Activated T-helper 1 cell treated with anti-CD3 and anti-CD28 coated beads, Interleukin-12 subunit alpha, Interleukin-12 subunit beta, Interleukin-2, Interleukin-4 antibody, amounts not matched to agents 30 ng/mL and 10 ng/mL and 1 ng/mL, durations not matched to agents 14 hours and 24 hours and 36 hours (primary cell): ENCODE measurements at regions of chr7 and their contacts with region 1.

Region 1: DNA sequence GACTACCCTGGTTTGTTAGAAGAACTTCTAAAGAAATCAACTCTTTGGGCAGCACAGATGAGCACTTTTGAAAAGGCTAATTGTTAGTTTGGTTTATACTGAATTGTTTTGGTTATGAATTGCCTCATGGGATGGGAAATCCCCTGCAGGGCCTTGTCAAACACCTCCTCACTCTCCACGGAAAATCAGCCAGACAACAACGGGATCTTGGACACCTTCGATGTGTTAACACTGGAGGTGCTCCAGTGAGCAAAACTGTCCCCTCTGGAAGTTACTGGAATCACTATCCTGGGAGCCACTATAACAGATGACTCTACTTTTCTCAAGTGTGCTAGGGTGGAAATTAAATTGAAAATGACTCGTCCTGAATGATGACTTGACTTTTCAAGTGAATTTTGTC is 38.7 kb downstream of the CDK6 start:
- DNase-seq: peak; percentile 27
- H3K4me3 Mint-ChIP-seq: no peak overlapping the region
- H3K27ac Mint-ChIP-seq: no peak overlapping the region
- H3K4me1 Mint-ChIP-seq: peaks cover 43% of the 10 kb centered on the region
- H3K27me3 Mint-ChIP-seq: no peaks in the 10 kb centered on the region

Region 2: GRCh38 chr7:92731335-92732063 is 66.2 kb before region 1 on chr7:
- intact Hi-C with region 1: loop called (anchors 1 kb)
- DNase-seq: no peak
- H3K4me3 Mint-ChIP-seq: peak overlapping the region; percentile 23
- H3K27ac Mint-ChIP-seq: peak overlapping the region; percentile 92
- H3K4me1 Mint-ChIP-seq: peaks cover 80% of the 10 kb centered on the region
- H3K27me3 Mint-ChIP-seq: no peaks in the 10 kb centered on the region

Region 3: GRCh38 chr7:92751902-92752901 is 45.5 kb before region 1 on chr7:
- intact Hi-C with region 1: loop called (anchors 1 kb)
- DNase-seq: no peak
- H3K4me3 Mint-ChIP-seq: no peak overlapping the region
- H3K27ac Mint-ChIP-seq: peak overlapping the region; percentile 68
- H3K4me1 Mint-ChIP-seq: peaks cover 87% of the 10 kb centered on the region
- H3K27me3 Mint-ChIP-seq: no peaks in the 10 kb centered on the region

Region 4: DNA sequence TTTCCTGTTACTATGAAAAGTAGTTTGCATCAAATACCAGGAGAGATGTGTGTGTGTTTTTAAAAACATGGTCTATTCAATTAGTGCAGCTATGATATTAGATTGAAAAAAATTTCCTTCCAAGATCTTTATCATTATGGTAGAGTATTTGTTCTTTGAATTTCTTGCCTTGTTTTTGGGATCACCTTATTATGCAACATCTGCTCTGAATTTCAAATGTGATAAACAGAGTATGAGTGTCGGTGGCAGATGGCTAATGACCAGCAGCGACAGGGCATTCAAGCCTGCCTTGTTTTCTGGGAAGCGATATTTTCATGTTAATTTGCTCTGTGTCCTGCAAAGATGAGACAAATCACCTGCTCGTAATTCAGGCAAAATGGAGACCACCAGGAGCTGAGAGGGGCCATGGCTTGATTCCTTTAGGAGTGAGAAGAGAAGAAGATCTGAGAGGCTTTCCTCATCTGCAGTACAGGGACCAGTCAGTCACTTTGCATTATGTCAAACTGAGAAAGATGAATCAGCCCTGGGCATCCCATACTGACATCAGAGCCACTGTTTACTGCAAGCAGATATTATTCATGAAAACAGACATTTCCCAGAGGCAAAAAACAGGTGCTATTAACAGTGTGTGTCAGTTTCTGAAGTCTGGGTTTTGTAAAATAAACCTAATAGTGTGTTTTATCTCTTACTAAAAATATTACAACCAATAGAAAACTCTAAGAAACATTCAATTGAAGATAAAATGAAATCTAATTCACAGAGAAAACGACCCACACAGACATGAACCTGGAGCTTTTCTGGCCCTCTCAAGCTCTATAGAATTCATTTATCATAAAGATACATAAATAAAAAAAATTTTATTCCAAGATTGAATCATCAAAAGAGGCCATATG is 28.9 kb before region 1 on chr7:
- intact Hi-C with region 1: loop called (anchors 1 kb)
- DNase-seq: peak; percentile 20
- H3K4me3 Mint-ChIP-seq: peak overlapping the region; percentile 47
- H3K27ac Mint-ChIP-seq: peak overlapping the region; percentile 85
- H3K4me1 Mint-ChIP-seq: peaks cover 83% of the 10 kb centered on the region
- H3K27me3 Mint-ChIP-seq: no peaks in the 10 kb centered on the region

Region 5: DNA sequence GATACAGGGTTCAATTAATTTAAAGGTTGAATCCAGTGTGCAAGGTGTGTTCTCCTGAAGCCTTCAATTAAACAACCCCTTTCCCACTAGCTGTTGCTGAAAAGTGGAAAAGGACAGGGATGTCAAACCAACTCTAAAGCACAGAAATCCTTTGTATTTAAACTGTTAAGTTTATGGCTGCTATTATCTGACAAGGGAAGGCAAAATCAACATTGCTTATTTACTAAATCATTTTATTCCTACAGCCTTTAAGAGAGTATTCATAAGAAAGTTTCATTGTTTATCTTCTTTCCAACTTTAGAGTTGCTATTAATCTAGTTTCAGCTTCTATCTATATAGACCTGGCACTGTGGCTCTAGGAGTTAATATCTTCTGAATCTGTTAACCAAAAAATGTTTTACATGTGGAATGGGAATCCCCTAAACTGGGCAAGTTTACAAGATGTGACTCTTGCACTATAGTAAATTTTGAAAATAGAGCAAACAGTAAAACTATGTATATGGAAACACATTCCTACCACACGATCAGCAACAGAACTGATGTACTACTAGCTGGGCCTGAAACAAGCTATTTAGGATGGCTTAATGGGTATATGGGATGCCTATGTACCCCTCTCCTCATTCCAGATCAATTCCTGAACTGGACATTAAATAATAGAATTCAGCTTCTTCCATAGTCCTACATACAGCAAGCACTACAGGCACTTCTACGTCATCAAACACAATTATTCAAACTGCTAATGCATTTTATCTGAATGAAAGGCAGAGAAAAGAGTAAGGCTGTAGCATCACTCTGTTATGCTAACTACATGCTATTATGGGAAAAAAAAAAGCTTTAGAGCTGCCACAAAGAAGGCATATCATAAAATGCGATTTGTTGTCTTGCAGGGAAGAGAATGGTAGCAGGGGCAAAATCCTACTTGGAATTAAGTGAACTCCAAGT is 14.2 kb before region 1 on chr7:
- intact Hi-C with region 1: loop called (anchors 1 kb)
- DNase-seq: no peak
- H3K4me3 Mint-ChIP-seq: no peak overlapping the region
- H3K27ac Mint-ChIP-seq: peak overlapping the region; percentile 22
- H3K4me1 Mint-ChIP-seq: peaks cover 66% of the 10 kb centered on the region
- H3K27me3 Mint-ChIP-seq: no peaks in the 10 kb centered on the region

Region 6: GRCh38 chr7:92824901-92825480 is 27.3 kb after region 1 on chr7:
- intact Hi-C with region 1: loop called (anchors 2 kb)
- DNase-seq: no peak
- H3K4me3 Mint-ChIP-seq: peak overlapping the region; percentile 70
- H3K27ac Mint-ChIP-seq: peak overlapping the region; percentile 64
- H3K4me1 Mint-ChIP-seq: peaks cover 91% of the 10 kb centered on the region
- H3K27me3 Mint-ChIP-seq: no peaks in the 10 kb centered on the region

Region 7: GRCh38 chr7:92854501-92855238 is 57.0 kb after region 1 on chr7:
- intact Hi-C with region 1: no loop called
- DNase-seq: no peak
- H3K4me3 Mint-ChIP-seq: peak overlapping the region; percentile 4
- H3K27ac Mint-ChIP-seq: peak overlapping the region; percentile 89
- H3K4me1 Mint-ChIP-seq: peaks cover 17% of the 10 kb centered on the region
- H3K27me3 Mint-ChIP-seq: no peaks in the 10 kb centered on the region